H1 (cell line): ENCODE measurements at regions of chr5 and their contacts with region 1.

Region 1: DNA sequence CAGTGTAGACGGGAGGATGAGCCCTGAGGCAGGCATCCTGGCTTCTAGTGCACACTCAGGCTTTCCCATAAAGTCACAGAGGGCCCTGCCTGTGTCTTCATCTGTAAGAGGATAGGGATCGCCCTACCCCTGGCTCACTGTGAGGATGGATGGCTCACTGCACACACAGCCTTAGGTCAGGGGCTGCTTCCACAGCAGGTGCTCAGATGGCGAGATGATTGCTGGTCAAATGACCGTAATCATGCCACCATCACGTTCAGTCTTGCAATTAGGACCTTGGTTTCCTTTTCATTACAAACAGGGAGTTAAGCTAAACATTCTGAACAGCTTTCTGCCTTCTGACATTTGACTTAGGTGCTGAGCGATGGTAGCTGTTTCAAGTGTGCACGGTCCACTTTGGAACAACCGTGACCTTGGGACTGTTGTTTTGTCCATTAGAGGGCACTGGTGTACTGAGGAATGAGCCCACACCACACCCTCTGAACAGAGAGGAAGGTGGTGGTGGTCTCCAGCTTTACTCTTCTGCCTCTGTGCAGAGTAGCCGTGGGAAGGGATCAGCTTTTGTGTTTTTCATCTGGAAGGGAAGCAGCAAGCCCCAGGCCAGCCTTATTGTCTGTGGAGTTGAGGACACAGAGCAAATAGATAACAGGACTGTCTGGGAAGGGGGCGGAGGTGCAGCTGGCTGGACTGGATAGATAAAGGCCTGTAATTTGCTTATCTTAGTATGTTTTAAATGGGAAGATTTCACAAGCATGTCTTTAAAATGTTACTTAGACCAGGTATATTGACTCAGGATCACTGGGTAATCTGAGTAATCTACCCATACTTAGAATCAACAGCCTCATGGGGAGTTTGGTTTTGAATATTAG is 183.1 kb downstream of the TRIO start:
- DNase-seq: no peak
- H3K4me3 ChIP-seq: no peak overlapping the region
- H3K27ac ChIP-seq: no peak overlapping the region
- H3K4me1 ChIP-seq: peaks cover 0 to 12% (median 1%) of the 10 kb centered on the region in 4 experiments; a peak in 3 of 7 replicates
- H3K27me3 ChIP-seq: no peaks in the 10 kb centered on the region
- CTCF ChIP-seq: peak; percentile 50 to 75 (median 59)
- EP300 ChIP-seq: no peak
- POLR2A ChIP-seq: no peak
- RAD21 ChIP-seq: peak; percentile 74 to 82

Region 2: GRCh38 chr5:14342306-14342705 is 16.0 kb after region 1 on chr5:
- CTCF ChIA-PET with region 1: interaction called, 41 read pairs
- POLR2A ChIA-PET with region 1: interaction called, 3 read pairs
- DNase-seq: no peak
- H3K4me3 ChIP-seq: peak overlapping the region in 3 of 4 experiments; percentile 1 to 8 (median 6); a peak in 3 of 8 replicates
- H3K27ac ChIP-seq: no peak overlapping the region
- H3K4me1 ChIP-seq: peaks cover 4 to 16% (median 8%) of the 10 kb centered on the region in 4 experiments; a peak in 4 of 7 replicates
- H3K27me3 ChIP-seq: no peaks in the 10 kb centered on the region
- CTCF ChIP-seq: no peak
- EP300 ChIP-seq: no peak
- POLR2A ChIP-seq: no peak
- RAD21 ChIP-seq: no peak

Region 3: DNA sequence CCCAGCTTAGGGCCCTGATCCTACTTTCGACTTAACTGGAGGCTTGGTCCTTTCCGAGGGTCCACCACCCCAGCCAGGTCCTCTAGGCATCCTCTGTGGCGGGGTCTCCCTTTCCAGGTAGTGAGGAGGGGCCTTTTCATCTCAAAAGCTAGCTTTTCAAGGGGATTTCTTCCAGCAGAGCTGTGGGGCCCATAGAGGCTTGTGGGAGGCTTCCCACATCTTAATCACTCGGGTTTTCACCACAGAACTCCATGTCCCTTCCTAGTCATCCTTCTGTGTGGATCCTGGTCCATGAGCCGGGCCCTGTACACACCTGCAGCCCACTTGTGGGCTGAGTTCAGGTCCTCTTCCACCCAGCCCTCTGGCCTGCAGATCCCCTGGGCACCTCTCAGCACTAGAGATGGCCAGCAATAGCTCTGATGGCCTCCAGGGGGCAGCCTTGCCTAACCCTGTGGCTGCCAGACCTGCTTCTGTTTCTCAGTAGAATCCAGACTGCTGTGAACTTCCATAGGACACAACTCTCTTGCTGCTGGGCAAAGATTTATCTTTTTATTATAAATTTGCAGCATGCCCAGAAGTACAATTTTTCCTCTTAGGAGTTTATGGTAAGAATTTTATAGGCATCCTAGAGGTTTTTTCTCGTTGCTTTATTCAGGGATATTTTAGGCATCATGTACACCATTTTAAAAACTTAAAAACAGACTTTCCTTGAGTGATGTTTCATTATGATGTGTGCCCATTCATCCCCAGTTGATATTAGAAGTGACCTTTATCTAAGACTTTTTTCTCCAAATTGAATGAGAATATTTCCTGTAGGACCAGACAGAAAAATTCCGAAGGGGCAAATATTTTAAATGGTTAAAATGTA is 25.8 kb after region 1 on chr5:
- CTCF ChIA-PET with region 1: interaction called, 155 read pairs
- POLR2A ChIA-PET with region 1: interaction called, 3 read pairs
- DNase-seq: peak; percentile 38 to 76
- H3K4me3 ChIP-seq: no peak overlapping the region
- H3K27ac ChIP-seq: no peak overlapping the region
- H3K4me1 ChIP-seq: peaks cover under 1 to 7% (median 4%) of the 10 kb centered on the region in 4 experiments; a peak in 4 of 7 replicates
- H3K27me3 ChIP-seq: no peaks in the 10 kb centered on the region
- CTCF ChIP-seq: peak; percentile 90 to 99 (median 99)
- EP300 ChIP-seq: no peak
- POLR2A ChIP-seq: no peak
- RAD21 ChIP-seq: peak; percentile 84 to 93

Region 4: GRCh38 chr5:14424011-14424685 is 97.9 kb after region 1 on chr5:
- CTCF ChIA-PET with region 1: no interaction called
- POLR2A ChIA-PET with region 1: no interaction called
- DNase-seq: no peak
- H3K4me3 ChIP-seq: no peak overlapping the region
- H3K27ac ChIP-seq: no peak overlapping the region
- H3K4me1 ChIP-seq: peaks cover 0 to 4% (median 0%) of the 10 kb centered on the region in 4 experiments; a peak in 2 of 7 replicates
- H3K27me3 ChIP-seq: no peaks in the 10 kb centered on the region
- CTCF ChIP-seq: no peak
- EP300 ChIP-seq: no peak
- POLR2A ChIP-seq: no peak
- RAD21 ChIP-seq: no peak

Region 5: DNA sequence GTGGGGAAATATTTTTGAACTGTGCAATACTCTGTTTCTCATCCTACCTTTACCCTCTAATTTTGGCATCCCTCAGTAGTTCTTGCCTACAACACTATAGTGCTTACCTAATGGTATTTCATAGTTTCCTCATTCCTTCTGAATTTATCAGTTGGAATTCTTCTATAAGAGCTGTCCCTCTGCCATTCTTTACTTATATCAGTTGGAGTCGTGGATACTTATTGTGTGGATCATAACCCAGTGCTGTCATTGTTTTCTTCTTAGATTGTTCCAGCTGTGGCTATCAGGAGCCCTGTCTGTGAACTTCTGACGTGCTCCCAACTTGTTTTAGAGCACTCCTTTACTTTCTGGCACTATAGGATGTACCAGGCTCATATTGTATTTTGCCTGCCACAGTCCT is 109.2 kb after region 1 on chr5:
- CTCF ChIA-PET with region 1: no interaction called
- POLR2A ChIA-PET with region 1: no interaction called
- DNase-seq: no peak
- H3K4me3 ChIP-seq: no peak overlapping the region
- H3K27ac ChIP-seq: no peak overlapping the region
- H3K4me1 ChIP-seq: peaks cover 0 to 3% (median 0%) of the 10 kb centered on the region in 4 experiments; a peak in 3 of 7 replicates
- H3K27me3 ChIP-seq: no peaks in the 10 kb centered on the region
- CTCF ChIP-seq: no peak
- EP300 ChIP-seq: no peak
- POLR2A ChIP-seq: no peak
- RAD21 ChIP-seq: no peak